Astrocyte of the cerebellum (primary cell): ENCODE measurements at regions of chr2 and their contacts with region 1.

Region 1: DNA sequence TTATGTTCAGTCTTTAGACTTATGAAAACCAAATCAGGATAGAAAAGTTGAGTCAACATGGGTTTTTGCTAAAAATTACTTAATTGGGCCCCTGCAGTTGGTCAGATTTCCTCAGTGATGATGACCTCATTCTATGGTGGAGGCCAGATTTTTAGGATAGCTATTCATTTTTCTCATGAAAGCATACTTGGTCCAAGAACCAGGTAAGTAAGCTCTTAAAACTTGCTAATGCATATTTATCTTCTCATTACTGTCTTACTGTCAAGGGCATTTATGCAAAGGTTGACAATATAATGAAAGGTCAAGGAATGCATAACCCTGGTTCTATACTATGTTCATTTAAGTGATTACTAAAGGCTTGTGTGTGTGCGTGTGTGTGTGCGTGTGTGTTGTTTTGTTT is 650.6 kb downstream of the SATB2 start:
- DNase-seq: peak; percentile 12
- H3K4me3 ChIP-seq: no peak overlapping the region
- CTCF ChIP-seq: no peak

Region 2: GRCh38 chr2:198774576-198774975 is 32.6 kb before region 1 on chr2:
- in situ Hi-C with region 1: loop called (anchors 5 kb)
- DNase-seq: no peak
- H3K4me3 ChIP-seq: no peak overlapping the region
- CTCF ChIP-seq: no peak

Region 3: GRCh38 chr2:198991431-198991830 is 184.3 kb after region 1 on chr2:
- in situ Hi-C with region 1: no loop called
- DNase-seq: no peak
- H3K4me3 ChIP-seq: no peak overlapping the region
- CTCF ChIP-seq: no peak